ENCODE measurements at regions of chr3 and their contacts with region 1.

Region 1: GRCh38 chr3:77038468-77038929 is 1.4 kb upstream of the ROBO2 start:
- DNase-seq: peak in 1 of 2 donors; percentile 82
- H3K4me3 ChIP-seq: peak overlapping the region; percentile 63 to 82
- H3K27ac ChIP-seq: peak overlapping the region; percentile 63 to 73
- H3K4me1 ChIP-seq: no peaks in the 10 kb centered on the region
- H3K27me3 ChIP-seq: no peaks in the 10 kb centered on the region
- CTCF ChIP-seq: peak; percentile 38 to 71 (median 57)

Region 2: GRCh38 chr3:76997733-76998132 is 40.8 kb before region 1 on chr3:
- intact Hi-C with region 1: no loop called
- DNase-seq: no peak
- H3K4me3 ChIP-seq: no peak overlapping the region
- H3K27ac ChIP-seq: no peak overlapping the region
- H3K4me1 ChIP-seq: no peaks in the 10 kb centered on the region
- H3K27me3 ChIP-seq: no peaks in the 10 kb centered on the region
- CTCF ChIP-seq: no peak

Region 3: GRCh38 chr3:78645628-78646310 is 1607.3 kb after region 1 on chr3:
- intact Hi-C with region 1: loop called (anchors 2 kb)
- DNase-seq: no peak
- H3K4me3 ChIP-seq: no peak overlapping the region
- H3K27ac ChIP-seq: no peak overlapping the region
- H3K4me1 ChIP-seq: peaks cover 0 to 5% of the 10 kb centered on the region in 2 donors
- H3K27me3 ChIP-seq: no peaks in the 10 kb centered on the region
- CTCF ChIP-seq: peak; percentile 47 to 81 (median 71)